ENCODE measurements at regions of chr15 and their contacts with region 1.

Region 1: DNA sequence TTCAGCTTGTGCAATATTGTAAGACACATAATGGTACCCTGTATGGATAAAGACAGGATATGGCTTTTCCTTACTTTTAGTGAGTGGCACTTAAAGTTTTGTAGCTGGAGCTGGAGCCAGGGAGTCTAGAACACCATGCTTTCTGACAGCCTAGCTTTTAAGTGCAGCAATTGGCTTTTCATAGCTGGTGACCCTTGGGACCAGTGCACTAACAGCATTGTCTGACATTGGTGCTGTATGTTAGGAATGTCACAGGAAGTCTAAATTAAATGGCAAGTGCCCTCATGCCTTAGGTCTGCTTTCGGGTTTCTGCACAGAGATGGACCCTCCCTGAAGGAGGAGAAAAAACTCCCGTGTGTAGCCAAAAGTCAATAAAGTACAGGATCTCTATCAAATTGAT is 628.2 kb downstream of the NR2F2 start:
- DNase-seq: no peak
- ATAC-seq: no peak
- H3K4me3 ChIP-seq: no peak overlapping the region
- H3K27ac ChIP-seq: no peak overlapping the region
- H3K4me1 ChIP-seq: no peaks in the 10 kb centered on the region
- H3K27me3 ChIP-seq: no peaks in the 10 kb centered on the region
- CTCF ChIP-seq: no peak
- EP300 ChIP-seq: no peak
- POLR2A ChIP-seq: no peak
- RAD21 ChIP-seq: no peak

Region 2: DNA sequence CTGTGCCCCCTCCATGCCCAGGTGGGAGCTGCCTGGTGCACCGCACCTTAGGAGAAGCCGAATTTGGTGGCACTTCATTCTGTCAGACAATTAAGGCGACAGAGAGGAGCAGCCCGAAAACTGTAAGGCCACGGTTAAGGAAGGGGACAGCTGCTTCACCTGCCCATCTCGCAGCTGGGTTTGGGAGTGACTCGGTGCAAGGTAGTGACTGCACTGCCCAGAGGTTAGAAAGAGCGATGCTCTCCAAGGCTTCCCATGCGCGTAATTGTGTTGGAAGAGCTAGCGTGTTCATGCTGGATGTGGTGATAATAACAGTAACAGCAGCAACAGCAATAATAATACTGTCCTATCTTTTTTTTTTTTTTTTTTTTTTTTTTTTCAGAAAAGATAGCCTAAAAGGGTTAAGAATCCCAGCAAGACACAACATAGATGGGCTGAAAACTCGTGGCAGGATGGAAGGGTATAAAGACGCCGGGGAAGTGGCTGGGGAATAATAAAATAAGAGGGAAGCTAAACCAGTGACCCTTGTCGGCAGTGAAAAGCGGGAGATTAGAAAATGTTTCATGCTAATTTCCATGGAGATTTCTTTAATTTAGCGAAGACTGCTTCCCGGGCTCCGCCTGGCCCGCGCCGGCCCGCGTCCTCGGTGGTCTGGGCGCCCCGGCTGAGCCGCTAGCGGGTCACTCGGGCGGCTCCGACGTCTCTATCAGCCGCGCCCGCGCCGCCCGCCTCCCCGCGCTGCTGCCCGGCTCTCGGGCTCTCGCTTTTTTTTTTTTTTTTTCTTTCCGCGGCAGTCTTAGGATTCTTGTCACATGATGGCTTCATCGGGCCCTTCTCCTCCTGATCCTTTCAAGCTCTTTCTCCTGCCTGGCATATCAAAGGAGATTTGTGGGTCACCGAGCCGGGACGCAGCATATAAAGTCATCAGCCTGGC is 11.2 kb before region 1 on chr15:
- CTCF ChIA-PET with region 1: interaction called, 5 read pairs
- POLR2A ChIA-PET with region 1: interaction called, 4 read pairs
- RAD21 ChIA-PET with region 1: interaction called, 3 read pairs
- SMC1A ChIA-PET with region 1: interaction called, 10 read pairs
- in situ Hi-C with region 1: no loop called
- intact Hi-C with region 1: no loop called
- DNase-seq: no peak
- ATAC-seq: no peak
- H3K4me3 ChIP-seq: no peak overlapping the region
- H3K27ac ChIP-seq: no peak overlapping the region
- H3K4me1 ChIP-seq: no peaks in the 10 kb centered on the region
- H3K27me3 ChIP-seq: no peaks in the 10 kb centered on the region
- CTCF ChIP-seq: no peak
- EP300 ChIP-seq: no peak
- POLR2A ChIP-seq: no peak
- RAD21 ChIP-seq: no peak

Region 3: DNA sequence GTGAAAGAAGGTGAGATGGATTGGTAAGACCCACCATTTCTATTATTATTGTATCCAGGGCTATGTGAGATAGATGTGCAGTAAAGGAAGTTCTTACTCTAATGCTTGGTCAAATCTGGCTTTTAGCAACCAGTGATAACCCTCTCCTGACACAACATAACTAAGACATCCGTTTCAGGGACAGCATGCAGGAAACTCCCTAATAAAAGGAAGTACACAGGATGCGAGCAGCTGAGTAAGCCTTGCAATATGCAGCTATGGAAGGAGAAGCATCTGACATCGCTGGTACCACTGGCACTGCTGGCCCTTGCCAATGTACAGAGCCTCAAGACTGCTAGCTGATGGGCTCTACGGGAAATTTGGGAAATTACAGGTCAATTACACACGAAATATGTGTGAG is 34.1 kb after region 1 on chr15:
- CTCF ChIA-PET with region 1: no interaction called
- POLR2A ChIA-PET with region 1: no interaction called
- RAD21 ChIA-PET with region 1: no interaction called
- SMC1A ChIA-PET with region 1: no interaction called
- in situ Hi-C with region 1: no loop called
- intact Hi-C with region 1: no loop called
- DNase-seq: no peak
- ATAC-seq: peak; percentile 69
- H3K4me3 ChIP-seq: no peak overlapping the region
- H3K27ac ChIP-seq: no peak overlapping the region
- H3K4me1 ChIP-seq: no peaks in the 10 kb centered on the region
- H3K27me3 ChIP-seq: no peaks in the 10 kb centered on the region
- CTCF ChIP-seq: no peak
- EP300 ChIP-seq: no peak
- POLR2A ChIP-seq: no peak
- RAD21 ChIP-seq: no peak